Activated CD4-positive, alpha-beta T cell treated with anti-CD3 and anti-CD28 coated beads, Interleukin-2, amount 10 ng/mL, durations not matched to agents 24 days and 14 days (primary cell): ENCODE measurements at regions of chr11 and their contacts with region 1.

Region 1: GRCh38 chr11:62671575-62672389 is at the starts of genes LBHD1 and UQCC3:
- DNase-seq: peak; percentile 94
- H3K4me3 Mint-ChIP-seq: peak within 1 kb of the TSS; percentile 88
- H3K27ac Mint-ChIP-seq: peak within 1 kb of the TSS; percentile 92
- H3K4me1 Mint-ChIP-seq: peaks cover 38% of the 10 kb centered on the region
- H3K27me3 Mint-ChIP-seq: no peaks in the 10 kb centered on the region
- total RNA-seq, gene LBHD1: 21.5 and 23.0 TPM in 2 replicates
- total RNA-seq, gene UQCC3: 8.6 and 9.4 TPM in 2 replicates

Region 2: GRCh38 chr11:62427630-62428233 is 244.1 kb before region 1 on chr11:
- intact Hi-C with region 1: loop called (anchors 10 kb)
- DNase-seq: peak; percentile 74
- H3K4me3 Mint-ChIP-seq: peak overlapping the region; percentile 56
- H3K27ac Mint-ChIP-seq: peak overlapping the region; percentile 95
- H3K4me1 Mint-ChIP-seq: peaks cover 48% of the 10 kb centered on the region
- H3K27me3 Mint-ChIP-seq: peaks cover 5% of the 10 kb centered on the region

Region 3: DNA sequence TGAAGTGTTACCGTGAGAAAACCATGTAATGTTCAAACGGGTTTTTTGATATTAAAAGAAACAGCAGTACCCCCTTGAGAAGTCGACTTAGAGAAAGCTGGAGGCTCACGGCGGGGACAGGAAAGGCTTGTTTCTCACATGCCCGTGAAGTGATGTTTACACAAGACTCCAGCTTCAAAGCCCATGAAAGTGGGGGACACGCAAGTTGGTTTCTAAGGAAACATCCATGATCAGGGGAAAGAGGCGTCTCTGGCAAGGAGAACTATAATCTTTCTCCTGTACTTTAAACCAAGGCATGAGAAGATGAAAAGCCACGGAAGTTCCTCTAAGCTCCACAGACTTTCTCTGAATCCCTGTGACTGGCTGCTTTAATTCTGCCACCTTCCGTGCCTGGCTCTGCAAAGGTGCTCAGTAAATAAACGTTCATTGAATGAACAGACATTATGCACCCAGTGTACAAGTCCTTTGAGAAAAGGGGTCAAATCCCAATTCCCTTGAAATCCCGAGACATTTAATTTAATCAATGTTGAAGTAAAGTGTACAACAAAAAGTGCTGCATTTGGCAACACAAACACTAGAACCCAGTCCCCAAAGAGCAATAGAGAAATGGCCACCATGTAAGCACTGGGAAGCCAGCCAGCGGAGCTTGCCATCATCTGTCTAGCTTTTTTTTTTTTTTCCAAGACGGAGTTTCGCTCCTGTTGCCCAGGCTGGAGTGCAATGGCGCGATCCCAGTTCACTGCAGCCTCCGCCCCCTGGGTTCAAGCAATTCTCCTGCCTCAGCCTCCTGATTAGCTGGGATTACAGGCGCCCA is 183.8 kb before region 1 on chr11:
- intact Hi-C with region 1: no loop called
- DNase-seq: no peak
- H3K4me3 Mint-ChIP-seq: no peak overlapping the region
- H3K27ac Mint-ChIP-seq: no peak overlapping the region
- H3K4me1 Mint-ChIP-seq: peaks cover 4% of the 10 kb centered on the region
- H3K27me3 Mint-ChIP-seq: peaks cover 2% of the 10 kb centered on the region

Region 4: GRCh38 chr11:62737196-62737595 is 65.4 kb after region 1 on chr11:
- intact Hi-C with region 1: no loop called
- DNase-seq: no peak
- H3K4me3 Mint-ChIP-seq: no peak overlapping the region
- H3K27ac Mint-ChIP-seq: no peak overlapping the region
- H3K4me1 Mint-ChIP-seq: peaks cover 5% of the 10 kb centered on the region
- H3K27me3 Mint-ChIP-seq: no peaks in the 10 kb centered on the region